WTC11 (cell line): ENCODE measurements at regions of chr7 and their contacts with region 1.

Region 1: DNA sequence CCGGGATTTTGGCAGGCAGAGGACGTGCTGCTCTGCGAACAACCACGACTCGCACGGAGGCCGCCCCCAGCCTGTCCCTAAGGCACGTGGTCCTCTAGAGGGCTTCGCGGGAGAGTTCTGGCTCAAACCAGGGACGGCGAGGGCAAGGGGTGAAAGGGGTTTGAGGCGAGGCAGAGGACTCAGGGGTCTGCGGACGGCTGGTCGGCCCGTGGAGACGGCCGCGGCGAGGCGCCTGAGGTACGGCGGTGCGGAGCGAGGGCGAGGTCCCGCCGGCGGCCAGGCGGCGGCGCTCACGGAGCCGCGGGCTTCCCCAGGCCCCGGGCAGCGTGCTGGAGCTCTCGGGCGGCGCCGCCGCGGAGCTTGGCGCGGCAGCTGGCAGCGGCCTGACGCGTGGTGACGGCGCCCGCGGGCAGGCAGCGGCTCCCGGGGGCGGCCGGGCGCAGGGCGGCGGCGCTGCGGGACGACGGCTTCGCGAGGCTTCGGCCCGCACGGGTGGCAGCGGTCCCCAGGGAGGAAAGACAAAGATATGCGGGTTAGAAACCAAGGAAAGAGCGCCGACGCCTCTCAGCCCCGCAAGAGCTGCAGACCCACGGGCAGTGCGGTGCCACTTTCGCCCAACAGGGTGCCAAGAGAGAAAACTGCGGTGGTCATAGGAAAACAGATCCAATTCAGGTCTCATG is 44.8 kb downstream of the ZNF800 start:
- DNase-seq: peak; percentile 77
- ATAC-seq: peak; percentile 99
- H3K4me3 Mint-ChIP-seq: peak overlapping the region; percentile 55
- H3K27ac Mint-ChIP-seq: no peak overlapping the region
- H3K4me1 Mint-ChIP-seq: peaks cover 7% of the 10 kb centered on the region
- H3K27me3 Mint-ChIP-seq: peaks cover 78% of the 10 kb centered on the region
- CTCF ChIP-seq: peak; percentile 47

Region 2: DNA sequence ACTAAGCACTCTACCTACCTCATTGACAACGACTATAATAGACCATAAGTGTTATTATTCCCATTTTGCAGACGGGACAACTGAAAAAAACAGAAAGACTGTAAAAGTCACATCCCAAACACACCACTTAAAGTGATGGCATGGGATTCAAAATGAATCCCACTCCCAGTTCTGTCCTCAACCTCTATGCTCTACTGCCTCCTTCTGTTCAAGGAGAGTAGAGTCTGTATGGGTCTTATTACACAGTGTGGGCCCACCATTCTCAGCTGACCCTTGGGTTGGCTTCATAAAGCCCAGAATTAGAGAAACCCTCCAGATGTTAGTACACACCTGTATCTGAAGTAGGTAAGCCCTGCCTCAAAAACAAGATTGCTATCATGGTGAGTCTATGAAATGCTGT is 197.2 kb before region 1 on chr7:
- CTCF ChIA-PET with region 1: no interaction called
- POLR2A ChIA-PET with region 1: no interaction called
- DNase-seq: no peak
- ATAC-seq: peak; percentile 98
- H3K4me3 Mint-ChIP-seq: no peak overlapping the region
- H3K27ac Mint-ChIP-seq: no peak overlapping the region
- H3K4me1 Mint-ChIP-seq: peaks cover 5% of the 10 kb centered on the region
- H3K27me3 Mint-ChIP-seq: no peaks in the 10 kb centered on the region
- CTCF ChIP-seq: 0 out of 2 replicates have a peak, but pooled peaks have one; percentile 39

Region 3: GRCh38 chr7:127359011-127359410 is 11.3 kb after region 1 on chr7:
- CTCF ChIA-PET with region 1: interaction called, 11 read pairs
- POLR2A ChIA-PET with region 1: no interaction called
- DNase-seq: no peak
- ATAC-seq: no peak
- H3K4me3 Mint-ChIP-seq: no peak overlapping the region
- H3K27ac Mint-ChIP-seq: no peak overlapping the region
- H3K4me1 Mint-ChIP-seq: peaks cover 4% of the 10 kb centered on the region; the same call in 1 of the 2 replicates
- H3K27me3 Mint-ChIP-seq: no peaks in the 10 kb centered on the region
- CTCF ChIP-seq: no peak

Region 4: DNA sequence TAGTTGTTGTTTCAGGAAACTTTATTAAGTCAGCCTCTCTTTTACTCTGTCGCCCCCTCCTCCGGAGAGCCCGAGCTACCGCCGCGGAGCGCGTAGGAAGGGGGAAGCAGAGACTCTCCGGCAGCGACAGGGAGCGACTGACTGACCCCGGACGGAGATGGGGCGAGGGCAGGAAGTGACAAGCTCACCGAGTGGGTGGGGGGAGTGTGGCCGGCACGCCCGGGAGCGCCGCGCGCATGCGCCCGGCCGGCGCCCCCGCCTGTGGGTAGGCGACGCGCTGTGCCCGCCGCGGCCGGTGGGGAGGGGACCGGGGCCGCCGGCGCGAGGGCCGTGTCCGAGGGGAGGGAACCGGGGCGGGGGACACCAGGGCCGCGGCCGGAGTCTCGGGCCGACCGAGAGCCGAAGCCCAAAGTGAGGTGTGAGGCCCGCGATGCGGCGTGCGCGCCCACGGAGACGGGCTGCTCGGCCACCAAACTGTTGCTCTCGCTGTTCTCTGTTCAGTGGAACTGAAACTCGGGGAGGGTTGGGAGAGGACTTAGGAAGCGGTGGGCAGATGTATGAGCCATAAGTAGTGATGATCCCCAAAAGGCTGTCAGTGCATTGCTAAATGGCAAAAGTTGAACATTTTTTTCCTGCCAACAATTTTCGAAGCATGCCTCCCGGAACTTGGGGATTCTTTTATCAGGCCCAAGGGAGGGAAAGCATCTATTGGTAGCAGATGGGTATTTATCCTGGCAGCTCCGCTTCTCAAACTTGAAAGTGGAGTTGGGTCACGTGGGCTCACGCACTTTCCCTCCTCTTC is 45.1 kb after region 1 on chr7 and contains the start of gene ZNF800:
- CTCF ChIA-PET with region 1: interaction called, 10 read pairs
- POLR2A ChIA-PET with region 1: interaction called, 6 read pairs
- DNase-seq: peak; percentile 73
- ATAC-seq: peak; percentile 87
- H3K4me3 Mint-ChIP-seq: peak within 1 kb of the TSS; percentile 96
- H3K27ac Mint-ChIP-seq: no peak within 1 kb of the TSS
- H3K4me1 Mint-ChIP-seq: peaks cover 12% of the 10 kb centered on the region
- H3K27me3 Mint-ChIP-seq: peaks cover 62% of the 10 kb centered on the region
- CTCF ChIP-seq: no peak
- total RNA-seq, gene ZNF800: 5.7 to 7.0 TPM (median 6.2 TPM) in 3 replicates